AG04449 (cell line): ENCODE measurements at regions of chr3 and their contacts with region 1.

Region 1: GRCh38 chr3:38131621-38132369 is 5.1 kb downstream of the ACAA1 start:
- DNase-seq: no peak
- H3K4me3 ChIP-seq: no peak overlapping the region
- CTCF ChIP-seq: peak; percentile 57

Region 2: GRCh38 chr3:38108649-38109579 is 22.9 kb before region 1 on chr3:
- CTCF ChIA-PET with region 1: no interaction called
- POLR2A ChIA-PET with region 1: no interaction called
- DNase-seq: no peak
- H3K4me3 ChIP-seq: no peak overlapping the region
- CTCF ChIP-seq: no peak

Region 3: DNA sequence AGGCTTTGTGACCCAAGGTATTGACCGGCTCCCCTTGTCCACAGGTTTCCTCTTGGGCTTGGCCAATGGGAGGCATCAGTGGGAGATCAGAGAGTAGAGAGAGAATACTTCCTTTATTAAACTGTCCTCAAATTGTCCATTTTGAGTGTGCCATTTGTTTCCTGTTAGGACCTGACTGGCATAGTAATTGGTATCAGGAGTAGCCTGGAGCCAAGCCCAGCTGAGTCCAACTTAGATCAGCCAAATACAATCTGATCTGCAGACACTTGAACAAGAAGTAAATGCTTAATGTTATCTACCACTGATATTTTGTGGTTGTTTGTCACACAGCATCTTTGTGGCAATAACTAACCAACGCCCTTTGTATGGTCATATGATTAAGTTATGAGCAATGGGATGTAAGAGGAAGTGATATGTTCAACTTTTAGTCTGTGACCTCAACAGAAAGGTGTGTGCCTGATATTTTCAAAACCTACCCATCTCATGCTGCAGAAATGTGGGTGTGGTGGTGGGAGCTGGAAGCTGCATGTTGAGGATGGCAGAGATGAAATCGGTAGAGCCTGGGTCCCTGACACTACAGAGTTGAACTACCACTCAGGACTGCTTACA is 20.0 kb after region 1 on chr3:
- CTCF ChIA-PET with region 1: no interaction called
- POLR2A ChIA-PET with region 1: no interaction called
- DNase-seq: no peak
- H3K4me3 ChIP-seq: no peak overlapping the region
- CTCF ChIP-seq: no peak

Region 4: GRCh38 chr3:38247366-38248035 is 115.7 kb after region 1 on chr3:
- CTCF ChIA-PET with region 1: interaction called, 11 read pairs
- POLR2A ChIA-PET with region 1: interaction called, 4 read pairs
- DNase-seq: peak; percentile 71
- H3K4me3 ChIP-seq: no peak overlapping the region
- CTCF ChIP-seq: peak; percentile 35